Sciatic nerve (tissue), 2 donors: ENCODE measurements at regions of chr2 and their contacts with region 1.

Region 1: DNA sequence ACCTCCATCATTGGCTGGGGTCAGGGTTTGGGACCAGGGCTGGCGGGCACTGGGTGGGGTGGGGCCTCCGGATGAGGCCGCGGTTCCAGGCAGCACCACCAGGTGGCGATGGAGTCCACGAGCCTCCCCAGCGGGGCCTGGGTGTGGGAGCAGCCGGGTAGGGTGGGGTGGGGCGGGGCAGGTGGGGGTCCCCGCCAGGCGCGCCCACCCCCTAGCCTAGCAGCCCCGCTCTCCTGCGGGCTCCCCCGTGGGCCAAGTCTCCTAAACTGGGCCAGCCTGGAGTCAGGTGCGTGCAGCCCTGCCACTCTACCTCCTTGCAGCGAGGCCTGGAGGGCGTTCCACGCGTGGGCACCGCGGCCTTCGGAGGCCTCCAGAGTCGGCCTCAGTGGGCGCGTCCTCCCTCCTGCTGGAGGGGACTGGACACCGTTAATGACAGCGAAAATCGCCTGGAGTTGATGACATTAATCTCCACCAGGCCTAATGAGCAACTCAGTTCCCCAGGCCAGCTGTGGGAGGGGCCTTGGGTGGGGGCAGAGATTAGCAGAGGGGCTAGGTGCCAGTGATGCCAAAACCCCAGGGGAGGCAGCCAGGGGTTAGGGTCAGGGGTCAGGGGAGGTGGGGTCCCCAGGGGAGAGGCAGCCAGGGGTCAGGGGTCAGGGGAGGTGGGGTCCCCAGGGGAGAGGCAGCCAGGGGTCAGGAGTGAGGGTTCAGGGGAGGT is 187.6 kb downstream of the TWIST2 start:
- DNase-seq: peak; percentile 85
- ATAC-seq: peak; percentile 85

Region 2: DNA sequence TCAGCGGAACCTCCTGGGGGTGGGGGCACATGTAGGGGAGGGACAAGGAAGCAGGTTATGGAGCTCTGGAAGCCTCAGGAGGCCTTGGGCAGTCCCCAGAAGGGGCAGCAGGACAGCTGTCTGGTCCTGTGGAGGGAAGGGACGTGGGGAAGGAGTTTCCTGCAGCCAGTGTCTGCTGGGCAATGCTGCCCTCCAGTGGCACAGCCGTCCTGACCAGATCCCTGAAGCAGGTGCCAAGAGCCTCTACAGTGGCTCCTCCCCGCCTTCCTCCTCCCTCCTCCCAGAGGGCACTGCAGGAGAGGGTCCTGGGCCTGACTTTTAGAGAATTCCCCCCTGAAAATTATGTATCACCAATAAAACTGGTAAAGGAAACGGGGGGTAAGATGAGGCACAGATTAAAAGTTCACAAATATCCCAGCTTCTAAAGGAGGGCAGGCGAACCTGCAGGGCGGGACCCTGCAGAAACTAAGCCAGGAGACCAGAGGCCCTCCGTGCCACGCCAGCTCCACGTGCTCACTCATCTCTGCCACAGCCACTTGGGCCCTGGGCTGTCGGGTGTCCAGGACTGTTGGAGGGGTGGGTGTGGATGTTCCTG is 70.9 kb after region 1 on chr2:
- intact Hi-C with region 1: loop called (anchors 5 kb)
- DNase-seq: no peak
- ATAC-seq: peak; percentile 61

Region 3: DNA sequence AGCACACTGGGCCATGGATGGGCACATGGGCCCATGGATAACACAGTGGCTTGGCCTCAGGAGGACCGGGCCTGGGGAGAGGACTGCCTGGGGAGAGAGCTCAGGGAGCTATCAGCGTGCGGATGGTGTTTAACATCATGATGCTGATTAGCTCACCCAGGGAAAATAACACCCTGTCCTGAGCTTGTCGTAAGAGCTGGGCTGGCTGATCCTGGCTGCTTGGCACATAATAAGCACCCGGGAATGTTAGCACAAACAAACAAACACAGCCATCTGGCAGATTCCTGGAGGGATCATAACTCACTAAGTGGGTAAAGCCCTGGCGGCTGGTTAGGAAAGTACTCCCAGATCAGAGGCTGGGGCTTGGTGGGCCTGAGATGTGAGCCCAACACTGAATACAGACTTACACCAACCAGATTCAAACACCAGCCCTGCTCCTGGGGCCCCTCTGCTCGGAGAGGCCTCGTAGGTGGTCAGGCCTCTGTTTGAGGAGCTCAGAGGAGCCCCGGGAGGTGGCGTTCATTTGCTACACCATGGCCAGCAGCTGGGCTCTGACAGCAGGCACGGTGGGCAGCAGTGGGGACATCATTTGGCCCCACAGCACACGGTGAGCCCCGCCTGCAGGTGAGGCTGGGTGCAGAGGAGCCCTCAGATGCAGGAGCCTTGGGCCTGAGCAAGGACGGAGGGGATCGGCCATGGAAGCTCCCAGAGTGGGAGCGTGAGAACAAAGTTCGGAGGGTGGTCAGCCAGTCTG is 558.7 kb after region 1 on chr2:
- intact Hi-C with region 1: no loop called
- DNase-seq: peak; percentile 43
- ATAC-seq: no peak